Right ventricle myocardium superior (tissue), 1 donor: ENCODE measurements at regions of chr11 and their contacts with region 1.

Region 1: GRCh38 chr11:75160192-75160757 is 9.4 kb downstream of the SLCO2B1 start:
- DNase-seq: no peak
- ATAC-seq: peak; percentile 4

Region 2: DNA sequence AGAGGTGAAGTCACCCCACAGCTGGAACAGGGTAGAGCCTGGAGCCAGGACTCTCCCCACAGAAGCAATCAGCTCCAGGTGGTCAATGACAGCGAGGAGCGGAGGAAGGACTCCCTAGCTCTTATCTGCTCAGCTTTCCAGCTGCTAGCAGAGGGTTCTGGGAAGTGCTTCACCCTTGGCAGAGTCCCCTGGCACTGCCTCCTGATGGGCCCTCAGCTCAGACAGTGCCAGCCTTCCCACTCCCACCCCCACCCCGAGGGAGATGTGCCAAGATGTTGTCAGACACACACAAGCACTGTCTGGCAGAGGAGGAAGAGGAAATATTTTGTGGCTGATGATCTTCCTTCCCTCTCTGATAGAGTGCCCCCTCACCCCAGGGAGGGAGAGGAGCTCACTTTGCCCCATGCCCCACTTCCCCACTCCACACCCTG is 34.9 kb after region 1 on chr11:
- intact Hi-C with region 1: loop called (anchors 5 kb)
- DNase-seq: peak; percentile 89
- ATAC-seq: peak; percentile 89